Activated T-helper 1 cell treated with anti-CD3 and anti-CD28 coated beads, Interleukin-12 subunit alpha, Interleukin-12 subunit beta, Interleukin-2, Interleukin-4 antibody, amounts not matched to agents 30 ng/mL and 10 ng/mL and 1 ng/mL, durations not matched to agents 14 hours and 24 hours and 36 hours (primary cell): ENCODE measurements at regions of chr7 and their contacts with region 1.

Region 1: GRCh38 chr7:37448636-37449361 is at the start of gene ELMO1:
- DNase-seq: peak; percentile 75
- H3K4me3 Mint-ChIP-seq: peak within 1 kb of the TSS; percentile 93
- H3K27ac Mint-ChIP-seq: peak within 1 kb of the TSS; percentile 97
- H3K4me1 Mint-ChIP-seq: peaks cover 55% of the 10 kb centered on the region
- H3K27me3 Mint-ChIP-seq: peaks cover 7% of the 10 kb centered on the region
- total RNA-seq, gene ELMO1: 113 and 119 TPM in 2 replicates

Region 2: GRCh38 chr7:36677769-36678437 is 770.9 kb before region 1 on chr7:
- intact Hi-C with region 1: loop called (anchors 5 kb)
- DNase-seq: no peak
- H3K4me3 Mint-ChIP-seq: peak overlapping the region; percentile 67
- H3K27ac Mint-ChIP-seq: peak overlapping the region; percentile 89
- H3K4me1 Mint-ChIP-seq: peaks cover 56% of the 10 kb centered on the region
- H3K27me3 Mint-ChIP-seq: no peaks in the 10 kb centered on the region

Region 3: GRCh38 chr7:37208528-37208927 is 240.3 kb before region 1 on chr7:
- intact Hi-C with region 1: loop called (anchors 2 kb)
- DNase-seq: no peak
- H3K4me3 Mint-ChIP-seq: no peak overlapping the region
- H3K27ac Mint-ChIP-seq: no peak overlapping the region
- H3K4me1 Mint-ChIP-seq: peaks cover 15% of the 10 kb centered on the region
- H3K27me3 Mint-ChIP-seq: no peaks in the 10 kb centered on the region

Region 4: GRCh38 chr7:37342688-37343471 is 105.9 kb before region 1 on chr7:
- intact Hi-C with region 1: loop called (anchors 1 kb)
- DNase-seq: peak; percentile 62
- H3K4me3 Mint-ChIP-seq: peak overlapping the region; percentile 96
- H3K27ac Mint-ChIP-seq: peak overlapping the region; percentile 99
- H3K4me1 Mint-ChIP-seq: peaks cover 76% of the 10 kb centered on the region
- H3K27me3 Mint-ChIP-seq: no peaks in the 10 kb centered on the region

Region 5: DNA sequence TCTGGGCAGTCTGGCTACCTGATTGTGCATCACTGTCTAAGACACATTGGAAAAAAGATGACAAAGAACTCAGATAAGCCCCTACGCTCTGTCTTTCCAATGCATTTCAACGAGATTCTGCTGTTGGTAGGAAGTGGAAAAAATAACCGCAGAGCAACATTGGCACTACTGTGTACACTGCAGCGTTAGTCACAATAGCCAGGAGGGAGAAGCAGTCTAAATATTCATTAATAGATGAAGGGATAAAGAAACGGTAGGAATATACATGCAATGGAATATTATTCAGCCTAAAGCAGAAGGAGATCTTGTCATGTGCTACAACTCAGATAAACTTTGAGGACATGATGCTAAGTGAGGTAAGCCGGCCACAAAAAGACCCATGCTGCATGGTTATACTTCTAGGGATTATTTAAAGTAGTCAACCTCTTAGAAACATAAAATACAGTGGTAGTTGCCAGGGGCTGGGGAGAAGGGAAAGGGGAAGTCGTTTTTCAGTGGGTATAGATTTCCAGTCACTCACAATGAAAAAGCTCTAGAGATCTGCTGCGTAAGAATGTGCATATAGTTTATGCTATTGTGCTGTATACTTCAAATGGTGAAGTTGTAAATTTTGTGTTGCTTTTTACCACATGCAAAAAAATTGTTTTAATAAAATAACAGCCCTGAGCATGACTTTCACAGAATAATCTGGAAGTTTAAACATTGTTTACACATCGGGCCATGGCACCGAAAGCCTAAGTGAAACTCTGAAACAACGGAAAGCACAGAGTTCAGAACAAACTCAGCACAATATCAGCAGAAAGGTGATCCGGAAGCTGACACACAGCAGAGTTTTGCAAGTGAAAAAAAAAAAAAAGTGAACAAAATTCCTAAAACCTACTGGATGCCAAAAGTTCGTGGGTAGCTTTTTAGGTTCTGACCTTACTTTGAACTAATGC is 40.2 kb before region 1 on chr7:
- intact Hi-C with region 1: loop called (anchors 1 kb)
- DNase-seq: no peak
- H3K4me3 Mint-ChIP-seq: peak overlapping the region; percentile 83
- H3K27ac Mint-ChIP-seq: peak overlapping the region; percentile 96
- H3K4me1 Mint-ChIP-seq: peaks cover 78% of the 10 kb centered on the region
- H3K27me3 Mint-ChIP-seq: no peaks in the 10 kb centered on the region

Region 6: GRCh38 chr7:37510043-37510634 is 61.3 kb after region 1 on chr7:
- intact Hi-C with region 1: loop called (anchors 1 kb)
- DNase-seq: no peak
- H3K4me3 Mint-ChIP-seq: no peak overlapping the region
- H3K27ac Mint-ChIP-seq: no peak overlapping the region
- H3K4me1 Mint-ChIP-seq: no peaks in the 10 kb centered on the region
- H3K27me3 Mint-ChIP-seq: peaks cover 19% of the 10 kb centered on the region